ENCODE measurements at regions of chr7 and their contacts with region 1.

Region 1: DNA sequence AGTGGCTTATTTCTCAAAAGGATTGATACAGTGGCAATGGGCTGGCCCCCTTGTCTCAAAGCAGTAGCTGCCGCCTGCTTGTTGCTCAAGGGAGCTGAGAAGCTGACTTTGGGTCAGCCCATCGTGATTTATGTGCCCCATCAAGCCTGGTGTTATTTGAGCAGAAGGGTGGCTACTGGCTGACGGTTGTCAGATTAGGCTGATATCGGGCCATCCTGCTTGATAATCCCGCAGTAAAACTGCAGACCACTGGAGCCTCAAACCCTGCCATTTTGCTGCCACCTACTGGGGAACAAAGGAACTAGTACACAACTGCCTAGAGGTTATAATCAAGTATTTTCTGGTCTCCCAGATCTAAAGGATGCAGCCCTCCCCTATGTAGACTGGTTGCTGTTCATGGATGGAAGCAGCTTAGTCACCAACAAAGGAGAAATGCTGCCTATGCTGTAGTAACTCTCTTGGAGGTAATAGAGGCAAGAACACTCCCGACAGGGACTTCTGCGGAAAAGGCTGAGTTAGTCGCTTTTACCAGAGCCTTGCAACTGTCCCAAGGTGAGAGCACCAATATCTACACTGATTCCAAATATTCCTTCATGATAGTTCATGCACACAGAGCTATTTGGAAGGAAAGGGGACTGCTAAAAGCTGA is 65.9 kb upstream of the ZNF92 start:
- DNase-seq: peak in 7 of 9 donors; percentile 1 to 40 (median 32)
- ATAC-seq: peak; percentile 68
- H3K4me3 ChIP-seq: no peak overlapping the region
- H3K4me3 Mint-ChIP-seq: no peak overlapping the region
- H3K27ac ChIP-seq: no peak overlapping the region
- H3K27ac Mint-ChIP-seq: no peak overlapping the region
- H3K4me1 ChIP-seq: no peaks in the 10 kb centered on the region
- H3K4me1 Mint-ChIP-seq: no peaks in the 10 kb centered on the region
- H3K27me3 ChIP-seq: no peaks in the 10 kb centered on the region
- H3K27me3 Mint-ChIP-seq: peaks cover 0 to 9% (median 5%) of the 10 kb centered on the region in 5 donors

Region 2: DNA sequence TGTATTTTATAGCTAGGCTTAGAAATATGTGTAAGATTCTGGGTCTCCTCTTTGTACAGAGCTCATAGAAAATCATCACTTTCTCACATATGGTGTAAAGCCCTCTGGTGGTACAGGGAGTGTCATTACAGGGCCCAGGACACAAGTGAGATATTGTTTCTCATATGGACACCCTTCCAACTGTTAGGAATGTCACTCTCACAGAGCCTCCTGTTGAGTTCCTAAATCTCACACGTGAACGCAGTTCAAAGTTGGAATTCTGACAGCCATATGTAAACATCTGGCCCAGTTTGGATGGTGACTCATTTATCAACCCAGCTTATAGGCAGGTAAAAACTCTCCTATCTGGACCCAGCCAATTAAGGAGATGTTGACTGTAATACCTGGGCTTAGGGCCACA is 677.3 kb before region 1 on chr7:
- CTCF ChIA-PET with region 1: no interaction called
- POLR2A ChIA-PET with region 1: no interaction called
- intact Hi-C with region 1: loop called in 1 of 2 experiments (anchors 10 kb)
- DNase-seq: peak in 3 of 9 donors; percentile 9 to 12 (median 11)
- ATAC-seq: peak; percentile 48
- H3K4me3 ChIP-seq: no peak overlapping the region
- H3K4me3 Mint-ChIP-seq: no peak overlapping the region
- H3K27ac ChIP-seq: no peak overlapping the region
- H3K27ac Mint-ChIP-seq: no peak overlapping the region
- H3K4me1 ChIP-seq: no peaks in the 10 kb centered on the region
- H3K4me1 Mint-ChIP-seq: no peaks in the 10 kb centered on the region
- H3K27me3 ChIP-seq: no peaks in the 10 kb centered on the region
- H3K27me3 Mint-ChIP-seq: no peaks in the 10 kb centered on the region

Region 3: GRCh38 chr7:64951250-64951848 is 356.4 kb before region 1 on chr7:
- CTCF ChIA-PET with region 1: interaction called, 40 read pairs
- POLR2A ChIA-PET with region 1: no interaction called
- intact Hi-C with region 1: loop called (anchors 1 kb)
- DNase-seq: peak in 7 of 9 donors; percentile 15 to 60 (median 46)
- ATAC-seq: peak; percentile 74
- H3K4me3 ChIP-seq: no peak overlapping the region
- H3K4me3 Mint-ChIP-seq: no peak overlapping the region
- H3K27ac ChIP-seq: no peak overlapping the region
- H3K27ac Mint-ChIP-seq: no peak overlapping the region
- H3K4me1 ChIP-seq: no peaks in the 10 kb centered on the region
- H3K4me1 Mint-ChIP-seq: peaks cover 0 to 5% (median 4%) of the 10 kb centered on the region in 7 donors
- H3K27me3 ChIP-seq: no peaks in the 10 kb centered on the region
- H3K27me3 Mint-ChIP-seq: peaks cover 25 to 43% (median 39%) of the 10 kb centered on the region in 5 donors

Region 4: DNA sequence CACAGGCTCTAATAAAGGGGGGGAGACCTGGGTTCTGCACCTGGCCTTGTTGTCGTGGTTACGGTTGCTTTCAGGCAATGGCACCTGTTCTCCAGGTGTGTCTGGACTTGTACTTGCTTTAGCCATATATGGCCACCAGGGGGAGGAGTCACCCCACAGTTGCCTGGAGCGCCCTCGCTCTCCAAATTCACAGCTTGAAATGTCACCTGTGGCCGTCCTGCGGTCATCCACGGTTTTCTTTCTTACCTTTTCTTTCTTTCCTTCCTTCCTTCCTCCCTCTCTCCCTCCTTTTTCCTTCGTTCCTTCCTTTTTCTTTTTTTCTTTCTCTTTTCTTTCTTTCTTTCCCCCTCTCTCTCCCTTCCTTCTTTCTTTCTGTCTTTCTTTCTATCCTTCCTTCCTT is 91.3 kb before region 1 on chr7:
- CTCF ChIA-PET with region 1: no interaction called
- POLR2A ChIA-PET with region 1: no interaction called
- intact Hi-C with region 1: loop called (anchors 1 kb)
- DNase-seq: peak; percentile 18 to 72 (median 46)
- ATAC-seq: peak; percentile 80
- H3K4me3 ChIP-seq: no peak overlapping the region
- H3K4me3 Mint-ChIP-seq: peak overlapping the region in 2 of 10 donors; percentile 43 to 58
- H3K27ac ChIP-seq: no peak overlapping the region
- H3K27ac Mint-ChIP-seq: no peak overlapping the region
- H3K4me1 ChIP-seq: no peaks in the 10 kb centered on the region
- H3K4me1 Mint-ChIP-seq: peaks cover 0 to 3% (median 0%) of the 10 kb centered on the region in 7 donors
- H3K27me3 ChIP-seq: no peaks in the 10 kb centered on the region
- H3K27me3 Mint-ChIP-seq: peaks cover 0 to 3% (median 0%) of the 10 kb centered on the region in 5 donors

Measured in naive thymus-derived CD4-positive, alpha-beta T cell (primary cell).